Activated CD8-positive, alpha-beta memory T cell treated with anti-CD3 and anti-CD28 coated beads, Interleukin-2, amount 10 ng/mL, durations not matched to agents 7 days and 5 days (primary cell): ENCODE measurements at regions of chr5 and their contacts with region 1.

Region 1: GRCh38 chr5:170434966-170435605 is 45.9 kb upstream of the KCNMB1 start:
- DNase-seq: peak; percentile 60
- ATAC-seq: peak; percentile 78
- H3K4me3 Mint-ChIP-seq: no peak overlapping the region
- H3K27ac Mint-ChIP-seq: no peak overlapping the region
- H3K4me1 Mint-ChIP-seq: no peaks in the 10 kb centered on the region
- H3K27me3 Mint-ChIP-seq: peaks cover 9% of the 10 kb centered on the region

Region 2: DNA sequence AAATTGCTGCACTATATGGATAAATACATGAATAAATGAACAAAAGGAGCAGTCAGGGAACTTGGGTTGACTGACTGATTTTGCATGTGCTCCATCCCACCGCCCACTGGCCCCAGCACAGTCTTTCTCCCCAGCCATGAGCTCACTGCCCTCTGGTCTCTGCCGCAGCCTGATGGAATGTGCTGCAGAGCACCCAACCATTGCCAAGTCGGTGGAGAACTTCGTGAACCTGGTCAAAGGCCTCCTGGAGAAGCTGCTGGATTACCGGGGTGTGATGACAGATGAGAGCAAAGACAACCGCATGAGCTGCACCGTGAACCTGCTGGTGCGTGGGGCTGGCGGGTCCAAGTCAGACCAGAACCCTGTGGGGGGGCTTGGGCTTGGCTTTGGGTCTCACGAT is 400.9 kb before region 1 on chr5:
- CTCF ChIA-PET with region 1: no interaction called
- DNase-seq: no peak
- ATAC-seq: no peak
- H3K4me3 Mint-ChIP-seq: no peak overlapping the region
- H3K27ac Mint-ChIP-seq: no peak overlapping the region
- H3K4me1 Mint-ChIP-seq: no peaks in the 10 kb centered on the region
- H3K27me3 Mint-ChIP-seq: no peaks in the 10 kb centered on the region

Region 3: GRCh38 chr5:170420780-170421412 is 14.2 kb before region 1 on chr5:
- CTCF ChIA-PET with region 1: interaction called, 16 read pairs
- DNase-seq: peak; percentile 66
- ATAC-seq: peak; percentile 61
- H3K4me3 Mint-ChIP-seq: no peak overlapping the region
- H3K27ac Mint-ChIP-seq: no peak overlapping the region
- H3K4me1 Mint-ChIP-seq: peaks cover 6% of the 10 kb centered on the region
- H3K27me3 Mint-ChIP-seq: peaks cover 20% of the 10 kb centered on the region

Region 4: DNA sequence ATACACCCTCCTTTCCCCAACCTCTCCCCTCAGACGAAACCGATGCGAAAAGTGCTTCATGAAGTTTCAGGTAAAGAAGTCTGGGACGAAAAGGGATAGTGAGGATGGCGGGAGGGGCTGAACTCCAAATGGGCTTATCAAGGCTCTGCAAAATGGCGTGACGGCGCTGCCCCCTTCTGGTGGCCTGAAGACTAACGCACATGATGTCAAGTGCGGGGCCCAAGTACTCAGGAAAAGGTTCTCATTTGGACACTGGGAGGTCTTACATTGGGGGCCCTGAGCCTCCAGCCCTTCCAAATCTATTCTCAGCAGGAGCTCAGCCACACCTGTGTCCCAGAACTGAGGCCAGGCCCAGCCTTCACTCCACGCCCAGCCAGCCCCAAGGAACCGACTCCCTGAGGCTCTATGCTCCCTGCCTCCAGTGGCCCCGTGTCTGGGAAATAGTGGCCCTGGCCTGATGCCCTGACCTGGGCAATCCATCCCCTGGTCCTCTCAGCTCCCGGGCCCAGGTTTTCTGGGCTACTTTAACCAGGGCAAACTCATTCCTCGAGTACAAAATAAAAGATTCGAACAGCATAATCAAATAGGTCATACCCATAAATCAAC is 188.6 kb after region 1 on chr5:
- CTCF ChIA-PET with region 1: interaction called, 34 read pairs
- DNase-seq: peak; percentile 50
- ATAC-seq: peak; percentile 42
- H3K4me3 Mint-ChIP-seq: no peak overlapping the region
- H3K27ac Mint-ChIP-seq: no peak overlapping the region
- H3K4me1 Mint-ChIP-seq: peaks cover 7% of the 10 kb centered on the region
- H3K27me3 Mint-ChIP-seq: peaks cover 10% of the 10 kb centered on the region

Region 5: GRCh38 chr5:170633235-170634081 is 198.4 kb after region 1 on chr5:
- CTCF ChIA-PET with region 1: interaction called, 73 read pairs
- DNase-seq: no peak
- ATAC-seq: peak; percentile 28
- H3K4me3 Mint-ChIP-seq: no peak overlapping the region
- H3K27ac Mint-ChIP-seq: no peak overlapping the region
- H3K4me1 Mint-ChIP-seq: peaks cover 8% of the 10 kb centered on the region
- H3K27me3 Mint-ChIP-seq: peaks cover 13% of the 10 kb centered on the region